ENCODE measurements at regions of chr17 and their contacts with region 1.

Region 1: DNA sequence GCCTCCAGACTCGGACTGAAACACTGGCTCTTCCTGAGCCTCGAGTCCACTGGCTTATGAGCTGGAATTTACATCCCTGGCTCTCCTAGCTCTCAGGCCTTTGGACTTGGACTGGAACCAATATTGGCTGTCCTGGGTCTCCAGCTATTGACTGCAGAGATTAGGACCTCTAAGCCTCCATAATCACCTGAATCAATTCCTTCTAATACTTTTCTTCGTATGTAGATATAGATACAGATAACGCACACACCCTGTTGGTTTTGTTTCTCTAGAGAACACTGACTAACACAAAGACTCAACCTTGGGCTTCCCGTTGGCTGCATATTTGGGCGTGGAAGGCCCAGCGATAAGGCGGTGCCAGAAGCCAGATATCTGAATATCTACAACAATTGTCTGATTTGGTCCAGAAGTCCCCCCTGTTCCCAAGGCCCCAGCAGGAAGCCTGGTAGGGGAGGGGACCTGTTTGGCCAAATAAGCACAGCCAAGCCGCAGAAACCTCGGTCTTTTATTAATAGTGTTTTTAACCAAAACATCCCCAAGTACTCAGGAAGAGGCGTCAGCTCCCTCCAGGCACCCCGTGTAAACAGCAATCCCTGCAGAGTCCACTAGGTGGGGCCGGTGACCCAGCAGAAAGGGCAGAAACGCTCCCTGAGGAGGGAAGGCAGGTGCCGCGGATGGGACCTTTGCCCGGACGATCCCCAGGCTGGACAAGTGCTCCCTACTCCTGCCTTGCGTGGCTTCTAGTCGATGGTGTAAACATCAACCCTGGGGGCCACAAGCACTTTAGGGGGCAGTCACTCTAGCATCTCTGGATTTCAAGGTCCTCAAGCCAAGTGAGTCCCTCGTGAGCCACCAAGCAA is 57.0 kb downstream of the ABR start:
- DNase-seq: peak; percentile 87
- ATAC-seq: peak; percentile 99
- H3K4me3 Mint-ChIP-seq: no peak overlapping the region
- H3K27ac Mint-ChIP-seq: peak overlapping the region; percentile 30
- H3K4me1 Mint-ChIP-seq: peaks cover 2% of the 10 kb centered on the region
- H3K27me3 Mint-ChIP-seq: no peaks in the 10 kb centered on the region
- CTCF ChIP-seq: peak; percentile 92

Region 2: GRCh38 chr17:927611-928461 is 194.9 kb before region 1 on chr17:
- CTCF ChIA-PET with region 1: no interaction called
- POLR2A ChIA-PET with region 1: no interaction called
- intact Hi-C with region 1: no loop called
- DNase-seq: no peak
- ATAC-seq: no peak
- H3K4me3 Mint-ChIP-seq: no peak overlapping the region
- H3K27ac Mint-ChIP-seq: no peak overlapping the region
- H3K4me1 Mint-ChIP-seq: no peaks in the 10 kb centered on the region
- H3K27me3 Mint-ChIP-seq: peaks cover 11% of the 10 kb centered on the region
- CTCF ChIP-seq: no peak

Region 3: GRCh38 chr17:1110862-1111598 is 11.7 kb before region 1 on chr17:
- CTCF ChIA-PET with region 1: interaction called, 32 read pairs
- POLR2A ChIA-PET with region 1: interaction called, 3 read pairs
- intact Hi-C with region 1: no loop called
- DNase-seq: peak; percentile 58
- ATAC-seq: peak; percentile 8
- H3K4me3 Mint-ChIP-seq: peak overlapping the region; percentile 10
- H3K27ac Mint-ChIP-seq: peak overlapping the region; percentile 61
- H3K4me1 Mint-ChIP-seq: peaks cover 43% of the 10 kb centered on the region
- H3K27me3 Mint-ChIP-seq: no peaks in the 10 kb centered on the region
- CTCF ChIP-seq: no peak

Region 4: GRCh38 chr17:1164935-1165556 is 42.3 kb after region 1 on chr17:
- CTCF ChIA-PET with region 1: interaction called, 10 read pairs
- POLR2A ChIA-PET with region 1: interaction called, 4 read pairs
- intact Hi-C with region 1: no loop called
- DNase-seq: no peak
- ATAC-seq: no peak
- H3K4me3 Mint-ChIP-seq: no peak overlapping the region
- H3K27ac Mint-ChIP-seq: no peak overlapping the region
- H3K4me1 Mint-ChIP-seq: peaks cover 4% of the 10 kb centered on the region
- H3K27me3 Mint-ChIP-seq: no peaks in the 10 kb centered on the region
- CTCF ChIP-seq: no peak

Region 5: GRCh38 chr17:1186923-1187771 is 64.4 kb after region 1 on chr17:
- CTCF ChIA-PET with region 1: interaction called, 142 read pairs
- POLR2A ChIA-PET with region 1: no interaction called
- intact Hi-C with region 1: loop called (anchors 5 kb)
- DNase-seq: peak; percentile 77
- ATAC-seq: peak; percentile 89
- H3K4me3 Mint-ChIP-seq: no peak overlapping the region
- H3K27ac Mint-ChIP-seq: no peak overlapping the region
- H3K4me1 Mint-ChIP-seq: peaks cover 10% of the 10 kb centered on the region
- H3K27me3 Mint-ChIP-seq: no peaks in the 10 kb centered on the region
- CTCF ChIP-seq: peak; percentile 86

Region 6: GRCh38 chr17:1203111-1203966 is 80.6 kb after region 1 on chr17:
- CTCF ChIA-PET with region 1: interaction called, 16 read pairs
- POLR2A ChIA-PET with region 1: no interaction called
- intact Hi-C with region 1: no loop called
- DNase-seq: peak; percentile 59
- ATAC-seq: peak; percentile 45
- H3K4me3 Mint-ChIP-seq: no peak overlapping the region
- H3K27ac Mint-ChIP-seq: no peak overlapping the region
- H3K4me1 Mint-ChIP-seq: peaks cover 33% of the 10 kb centered on the region
- H3K27me3 Mint-ChIP-seq: no peaks in the 10 kb centered on the region
- CTCF ChIP-seq: no peak